ENCODE measurements at regions of chr2 and their contacts with region 1.

Region 1: GRCh38 chr2:133886735-133887660 is 318.7 kb upstream of the NCKAP5 start:
- DNase-seq: peak; percentile 83 to 90
- H3K4me3 ChIP-seq: no peak overlapping the region
- H3K27ac ChIP-seq: peak overlapping the region in 1 of 3 donors; percentile 12
- H3K4me1 ChIP-seq: peaks cover 0 to 13% of the 10 kb centered on the region in 2 donors
- H3K27me3 ChIP-seq: no peaks in the 10 kb centered on the region
- CTCF ChIP-seq: peak; percentile 29 to 67 (median 57)
- POLR2A ChIP-seq: no peak

Region 2: DNA sequence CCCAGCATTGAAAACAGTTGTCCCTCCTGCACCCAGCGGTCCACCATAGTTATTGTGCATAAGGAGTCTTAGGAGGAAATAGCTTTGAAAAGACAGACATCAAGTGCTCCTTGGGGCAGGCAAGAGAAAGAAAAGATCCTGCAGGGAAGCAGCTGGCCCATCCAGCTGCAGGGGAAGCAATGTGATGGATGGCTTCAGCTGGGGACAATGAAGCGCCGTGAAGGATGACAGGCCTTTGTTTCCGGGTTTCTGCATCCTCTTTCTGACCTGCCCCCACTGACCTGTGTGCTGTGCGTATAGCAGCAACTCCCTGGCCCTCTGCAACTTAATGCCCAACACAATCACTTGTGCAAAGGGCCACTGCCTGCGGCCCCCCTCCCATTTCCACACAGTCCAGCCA is 175.8 kb before region 1 on chr2:
- intact Hi-C with region 1: no loop called
- DNase-seq: no peak
- H3K4me3 ChIP-seq: no peak overlapping the region
- H3K27ac ChIP-seq: no peak overlapping the region
- H3K4me1 ChIP-seq: no peaks in the 10 kb centered on the region
- H3K27me3 ChIP-seq: no peaks in the 10 kb centered on the region
- CTCF ChIP-seq: no peak
- POLR2A ChIP-seq: no peak

Region 3: GRCh38 chr2:133723133-133723532 is 163.9 kb before region 1 on chr2:
- intact Hi-C with region 1: no loop called
- DNase-seq: no peak
- H3K4me3 ChIP-seq: no peak overlapping the region
- H3K27ac ChIP-seq: no peak overlapping the region
- H3K4me1 ChIP-seq: no peaks in the 10 kb centered on the region
- H3K27me3 ChIP-seq: no peaks in the 10 kb centered on the region
- CTCF ChIP-seq: no peak
- POLR2A ChIP-seq: no peak

Region 4: DNA sequence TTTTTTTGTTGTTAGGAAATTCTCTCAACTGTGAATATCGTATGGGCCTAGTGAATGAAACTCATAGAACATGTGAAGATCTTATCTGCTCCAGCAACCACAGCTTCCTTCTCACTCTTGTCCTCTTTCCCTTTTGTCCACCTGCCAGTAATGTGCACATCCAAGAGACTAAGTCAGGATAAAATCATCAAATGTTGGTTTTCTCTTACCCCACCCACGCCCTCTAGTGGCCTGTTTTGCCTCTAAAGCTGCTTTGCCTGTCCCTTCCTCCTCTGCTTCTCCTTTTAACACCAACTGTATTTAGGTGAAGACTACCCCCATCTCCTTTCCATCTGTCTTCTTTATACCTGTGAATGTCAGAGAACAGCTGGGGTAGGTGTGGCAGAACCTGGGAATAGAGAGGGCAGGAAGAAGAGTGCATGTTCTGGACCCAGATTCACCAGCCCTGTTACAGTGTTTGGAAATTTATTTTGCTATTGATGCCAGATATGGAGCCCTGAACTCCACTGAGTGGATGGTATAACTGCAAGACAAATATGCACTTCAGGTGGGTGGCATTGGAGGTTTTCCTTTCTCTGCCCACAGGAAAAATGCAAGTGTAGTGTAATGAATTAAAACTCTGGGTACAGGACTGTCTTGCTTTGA is 358.5 kb after region 1 on chr2:
- intact Hi-C with region 1: loop called (anchors 10 kb)
- DNase-seq: peak; percentile 82 to 86
- H3K4me3 ChIP-seq: no peak overlapping the region
- H3K27ac ChIP-seq: no peak overlapping the region
- H3K4me1 ChIP-seq: peaks cover 5 to 15% of the 10 kb centered on the region in 2 donors
- H3K27me3 ChIP-seq: no peaks in the 10 kb centered on the region
- CTCF ChIP-seq: peak; percentile 52 to 85 (median 66)
- POLR2A ChIP-seq: no peak

Region 5: DNA sequence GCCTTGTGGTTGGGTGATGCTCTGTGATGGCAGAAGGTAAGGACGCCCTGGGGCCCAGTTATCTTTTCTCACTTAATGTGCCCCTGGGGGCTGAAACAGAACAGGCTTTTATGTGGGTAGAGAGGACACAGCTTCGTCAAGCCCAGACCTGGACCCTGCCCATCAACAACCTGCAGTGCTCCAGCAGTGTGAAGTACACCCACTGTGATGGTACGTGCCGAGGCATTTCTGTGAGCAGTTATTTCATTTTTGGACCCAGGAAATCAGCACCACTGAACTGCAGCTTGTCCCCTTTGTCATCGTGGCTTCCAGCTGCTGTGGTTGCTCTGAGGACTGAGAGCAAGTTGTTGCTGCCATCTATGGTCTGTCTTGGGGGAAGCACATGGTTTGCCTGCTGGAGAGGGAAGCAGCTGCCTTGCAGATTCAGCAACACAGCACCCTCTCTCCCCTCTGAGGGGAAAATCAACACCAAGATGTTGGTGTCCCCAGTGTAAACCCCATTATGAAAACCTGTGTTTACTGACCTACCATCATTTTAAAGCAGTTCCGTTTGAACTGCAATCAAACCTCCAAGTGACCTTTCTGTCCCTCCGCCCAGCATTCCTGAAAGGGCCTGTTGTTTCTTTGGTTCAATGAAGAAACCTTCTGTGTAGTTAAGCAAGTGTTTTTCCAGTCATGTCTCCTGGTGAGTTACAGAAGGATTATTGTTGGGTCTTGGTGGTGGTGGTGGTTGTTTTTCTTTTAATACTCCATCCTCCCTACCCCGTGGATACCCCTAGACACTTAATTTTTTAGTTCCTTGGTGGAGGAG is 525.0 kb after region 1 on chr2:
- intact Hi-C with region 1: loop called (anchors 10 kb)
- DNase-seq: peak; percentile 67 to 70
- H3K4me3 ChIP-seq: no peak overlapping the region
- H3K27ac ChIP-seq: peak overlapping the region in 1 of 3 donors; percentile 39
- H3K4me1 ChIP-seq: peaks cover 0 to 18% of the 10 kb centered on the region in 2 donors
- H3K27me3 ChIP-seq: no peaks in the 10 kb centered on the region
- CTCF ChIP-seq: peak in 4 of 6 experiments; percentile 70 to 88 (median 79)
- POLR2A ChIP-seq: no peak

Measured in thyroid gland (tissue), 4 donors.